B cell (primary cell): ENCODE measurements at regions of chr7 and their contacts with region 1.

Region 1: DNA sequence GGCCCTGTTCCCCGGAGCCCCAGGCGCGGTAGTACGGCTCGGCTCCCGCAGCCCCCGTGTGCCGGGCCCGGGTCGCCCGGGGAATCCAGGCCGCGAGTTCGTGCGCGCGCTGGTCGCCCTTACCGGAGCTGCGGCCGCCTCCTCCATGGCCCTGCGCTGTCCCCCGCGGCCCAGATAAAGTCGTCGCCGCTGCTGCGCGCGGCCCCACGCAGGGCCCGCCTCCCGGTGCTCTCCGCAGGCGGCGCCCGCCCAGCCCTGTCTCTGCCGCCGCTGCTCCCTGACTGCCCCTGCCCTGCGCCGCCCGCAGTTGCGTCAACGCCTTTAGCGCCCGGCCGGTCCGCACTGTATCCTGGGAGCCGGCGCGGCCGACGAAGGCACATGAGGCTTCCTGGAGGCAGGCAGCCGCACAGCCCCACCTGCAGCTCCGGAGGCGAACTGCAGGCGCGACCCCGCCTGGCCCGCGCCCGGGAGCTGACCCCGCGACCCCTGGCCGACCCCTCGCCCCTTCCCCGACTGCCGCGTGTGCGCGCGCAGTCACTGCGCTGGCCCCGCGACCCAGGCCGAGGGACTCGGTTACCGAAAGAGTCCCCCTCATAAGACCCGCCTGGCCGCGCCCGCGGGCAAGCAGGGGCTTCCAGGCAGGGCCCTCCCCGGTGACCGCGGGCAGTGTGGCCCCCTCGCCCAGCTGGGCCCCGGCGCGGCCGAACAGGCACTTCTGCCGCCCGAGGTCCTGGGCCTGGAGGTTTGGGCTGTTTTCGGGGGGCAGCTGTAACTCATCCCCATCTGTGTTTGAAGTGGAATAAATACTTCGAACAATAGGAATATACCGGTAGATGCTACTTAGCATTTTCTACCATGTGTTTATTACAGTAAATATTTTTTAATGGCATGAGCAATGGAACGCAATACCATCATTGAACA is 127.1 kb upstream of the ZNF746 start:
- DNase-seq: peak; percentile 94
- ATAC-seq: peak; percentile 90
- H3K4me3 ChIP-seq: peak overlapping the region; percentile 38 to 81 (median 76)
- H3K4me3 Mint-ChIP-seq: peak overlapping the region; percentile 95
- H3K27ac ChIP-seq: peak overlapping the region; percentile 48 to 78
- H3K27ac Mint-ChIP-seq: peak overlapping the region; percentile 93
- H3K4me1 ChIP-seq: peaks cover 25 to 33% of the 10 kb centered on the region in 2 donors
- H3K4me1 Mint-ChIP-seq: peaks cover 39% of the 10 kb centered on the region
- H3K27me3 ChIP-seq: peaks cover 0 to 3% (median 0%) of the 10 kb centered on the region in 4 experiments
- H3K27me3 Mint-ChIP-seq: peaks cover 9% of the 10 kb centered on the region
- CTCF ChIP-seq: peak; percentile 93

Region 2: DNA sequence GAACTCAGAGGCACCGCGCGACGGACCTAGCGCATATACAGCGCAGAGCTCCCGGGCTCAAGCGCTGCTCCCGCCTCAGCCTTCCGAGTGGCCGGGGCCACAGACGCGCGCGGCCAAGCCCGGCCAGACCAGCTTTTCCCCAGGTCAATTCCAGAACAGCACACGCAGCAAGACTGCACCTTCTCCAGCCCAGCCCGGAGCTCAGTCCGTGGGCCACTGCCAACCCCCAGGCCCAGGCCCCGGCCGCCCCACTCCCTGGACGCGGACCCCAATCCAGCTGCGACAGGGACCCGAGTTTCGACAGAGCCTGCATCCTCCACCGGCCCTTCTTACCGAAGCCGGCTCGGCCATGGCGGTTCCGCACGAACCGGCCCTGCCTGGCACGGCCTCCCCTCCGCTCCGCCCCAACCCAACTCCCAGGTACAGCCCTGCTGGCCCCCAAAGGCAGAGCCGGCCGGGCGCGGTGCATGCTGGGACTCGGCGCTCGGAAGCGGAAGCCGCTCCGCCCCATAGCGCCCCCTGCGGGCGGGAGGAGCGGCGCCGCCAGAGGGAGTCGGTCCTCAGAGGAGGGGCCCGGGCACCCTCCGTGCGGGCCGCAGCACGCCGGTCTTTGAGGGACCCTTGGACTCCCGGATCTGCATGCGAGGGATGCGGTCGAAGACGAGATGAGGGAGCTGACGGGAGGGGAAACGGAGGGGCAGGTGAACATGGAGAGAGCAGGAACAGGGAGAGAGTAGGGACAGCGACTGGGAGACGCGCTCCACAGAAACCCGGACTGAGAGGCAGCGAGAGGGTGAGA is 498.6 kb before region 1 on chr7 and contains the start of gene ZNF425:
- CTCF ChIA-PET with region 1: no interaction called
- POLR2A ChIA-PET with region 1: no interaction called
- intact Hi-C with region 1: loop called (anchors 2 kb)
- DNase-seq: peak; percentile 95
- ATAC-seq: peak; percentile 84
- H3K4me3 ChIP-seq: peak within 1 kb of the TSS; percentile 64 to 98 (median 88)
- H3K4me3 Mint-ChIP-seq: peak within 1 kb of the TSS; percentile 97
- H3K27ac ChIP-seq: peak within 1 kb of the TSS; percentile 85 to 89
- H3K27ac Mint-ChIP-seq: peak within 1 kb of the TSS; percentile 99
- H3K4me1 ChIP-seq: peaks cover 12 to 14% of the 10 kb centered on the region in 2 donors
- H3K4me1 Mint-ChIP-seq: peaks cover 22% of the 10 kb centered on the region
- H3K27me3 ChIP-seq: no peaks in the 10 kb centered on the region
- H3K27me3 Mint-ChIP-seq: no peaks in the 10 kb centered on the region
- CTCF ChIP-seq: peak; percentile 89
- total RNA-seq, gene ZNF425: 2.8 and 3.3 TPM in 2 replicates

Region 3: DNA sequence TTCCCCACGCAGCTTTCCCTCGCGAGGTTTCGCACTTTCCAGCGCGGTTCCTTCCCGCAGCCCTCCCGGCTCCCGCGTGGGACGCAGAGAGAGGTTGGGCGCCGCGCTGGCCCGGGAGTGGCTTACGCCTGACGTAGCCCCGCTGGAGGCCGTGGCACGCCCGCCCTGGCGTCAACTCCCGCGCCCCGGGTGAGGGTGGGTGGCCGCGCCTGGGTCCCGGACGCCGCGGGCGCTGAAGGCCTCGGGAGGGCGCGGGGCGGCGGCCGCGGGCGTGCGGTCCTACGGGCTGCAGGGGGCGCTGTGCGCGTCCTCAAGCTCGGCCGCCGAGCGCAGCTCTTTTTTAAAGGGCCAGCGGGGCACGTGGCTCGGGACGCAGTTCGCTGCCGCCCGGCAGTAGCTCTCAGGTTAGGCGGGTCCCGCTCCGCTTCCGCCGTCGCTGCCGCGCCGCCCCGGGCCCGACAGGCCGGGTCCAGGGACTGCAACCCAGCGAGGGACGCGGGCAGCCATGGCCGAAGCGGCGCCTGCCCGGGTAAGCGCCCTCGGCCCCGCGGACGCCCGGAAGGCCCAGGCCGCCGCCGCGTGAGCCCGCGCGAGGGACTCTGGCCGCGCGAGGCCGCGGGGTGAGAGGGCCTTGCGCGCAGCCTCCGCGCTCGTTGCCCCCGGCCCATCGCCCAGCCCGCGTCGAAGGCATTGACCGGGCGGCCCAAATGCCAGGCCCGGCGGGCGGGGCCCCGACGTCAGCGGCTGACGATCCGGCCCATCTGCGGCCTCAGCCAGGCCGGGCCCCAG is 362.7 kb before region 1 on chr7 and contains the start of gene ZNF783:
- CTCF ChIA-PET with region 1: interaction called, 3 read pairs
- POLR2A ChIA-PET with region 1: interaction called, 3 read pairs
- intact Hi-C with region 1: loop called (anchors 1 kb)
- DNase-seq: peak; percentile 94
- ATAC-seq: peak; percentile 93
- H3K4me3 ChIP-seq: peak within 1 kb of the TSS in 4 of 5 experiments; percentile 64 to 75 (median 68)
- H3K4me3 Mint-ChIP-seq: peak within 1 kb of the TSS; percentile 94
- H3K27ac ChIP-seq: peak within 1 kb of the TSS; percentile 69 to 76
- H3K27ac Mint-ChIP-seq: peak within 1 kb of the TSS; percentile 92
- H3K4me1 ChIP-seq: peaks cover 13 to 17% of the 10 kb centered on the region in 2 donors
- H3K4me1 Mint-ChIP-seq: peaks cover 21% of the 10 kb centered on the region
- H3K27me3 ChIP-seq: no peaks in the 10 kb centered on the region
- H3K27me3 Mint-ChIP-seq: no peaks in the 10 kb centered on the region
- CTCF ChIP-seq: peak; percentile 86
- total RNA-seq, gene ZNF783: 43.8 and 44.8 TPM in 2 replicates

Region 4: GRCh38 chr7:149330914-149331567 is 293.6 kb before region 1 on chr7:
- CTCF ChIA-PET with region 1: no interaction called
- POLR2A ChIA-PET with region 1: no interaction called
- intact Hi-C with region 1: no loop called
- DNase-seq: no peak
- ATAC-seq: no peak
- H3K4me3 ChIP-seq: no peak overlapping the region
- H3K4me3 Mint-ChIP-seq: no peak overlapping the region
- H3K27ac ChIP-seq: no peak overlapping the region
- H3K27ac Mint-ChIP-seq: no peak overlapping the region
- H3K4me1 ChIP-seq: no peaks in the 10 kb centered on the region
- H3K4me1 Mint-ChIP-seq: no peaks in the 10 kb centered on the region
- H3K27me3 ChIP-seq: peaks cover 0 to 10% (median 1%) of the 10 kb centered on the region in 4 experiments
- H3K27me3 Mint-ChIP-seq: peaks cover 26% of the 10 kb centered on the region
- CTCF ChIP-seq: no peak

Region 5: DNA sequence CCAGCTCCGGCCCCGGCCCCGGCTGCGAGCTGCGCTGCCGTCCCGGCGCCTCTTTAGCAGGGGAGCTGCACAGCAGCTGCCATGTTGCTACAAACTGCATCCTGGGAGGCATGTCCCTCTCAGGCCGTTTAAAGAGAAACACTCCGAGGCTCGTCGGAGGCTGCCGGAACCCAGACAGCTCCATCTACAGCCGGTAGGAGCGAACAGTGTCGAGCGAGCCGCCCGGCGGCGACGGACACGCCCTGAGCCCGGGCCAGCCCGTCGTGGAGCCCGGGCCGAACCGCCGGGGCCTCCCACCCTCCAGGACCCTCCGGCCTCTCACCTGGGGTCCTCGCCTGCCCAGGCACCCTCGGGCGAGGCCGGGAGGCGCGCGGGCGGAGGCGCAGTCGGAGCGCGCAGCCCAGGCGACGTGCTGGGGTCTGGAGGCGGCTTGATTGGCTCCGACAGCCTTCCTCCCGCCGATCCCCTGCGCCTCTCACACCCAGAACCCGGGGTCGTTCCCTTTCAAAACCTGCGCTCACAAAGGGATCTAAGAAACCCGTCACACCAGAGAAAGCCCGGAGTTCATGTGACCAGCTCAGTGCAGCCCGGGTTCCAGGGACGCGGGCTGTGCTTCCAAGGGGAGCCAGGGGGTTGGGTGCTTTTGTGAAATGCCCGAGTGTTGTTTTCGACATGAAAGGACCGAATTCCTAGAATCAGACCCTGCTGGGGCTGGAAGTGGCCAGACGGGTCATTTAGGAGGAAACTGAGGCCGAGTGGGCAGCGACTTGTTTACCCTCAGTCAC is 164.0 kb before region 1 on chr7 and contains the start of gene ZNF777:
- CTCF ChIA-PET with region 1: interaction called, 14 read pairs
- POLR2A ChIA-PET with region 1: interaction called, 3 read pairs
- intact Hi-C with region 1: loop called (anchors 1 kb)
- DNase-seq: peak; percentile 87
- ATAC-seq: peak; percentile 97
- H3K4me3 ChIP-seq: peak within 1 kb of the TSS; percentile 25 to 94 (median 70)
- H3K4me3 Mint-ChIP-seq: peak within 1 kb of the TSS; percentile 92
- H3K27ac ChIP-seq: peak within 1 kb of the TSS in 1 of 2 donors; percentile 65
- H3K27ac Mint-ChIP-seq: peak within 1 kb of the TSS; percentile 89
- H3K4me1 ChIP-seq: peaks cover 14% of the 10 kb centered on the region in 2 donors
- H3K4me1 Mint-ChIP-seq: peaks cover 31% of the 10 kb centered on the region
- H3K27me3 ChIP-seq: peaks cover 0 to 11% (median 2%) of the 10 kb centered on the region in 4 experiments
- H3K27me3 Mint-ChIP-seq: peaks cover 14% of the 10 kb centered on the region
- CTCF ChIP-seq: peak; percentile 43
- total RNA-seq, gene ZNF777: 14.9 and 16.0 TPM in 2 replicates

Region 6: GRCh38 chr7:149598721-149599306 is 25.9 kb before region 1 on chr7:
- CTCF ChIA-PET with region 1: interaction called, 27 read pairs
- POLR2A ChIA-PET with region 1: interaction called, 3 read pairs
- intact Hi-C with region 1: loop called (anchors 1 kb)
- DNase-seq: no peak
- ATAC-seq: no peak
- H3K4me3 ChIP-seq: peak overlapping the region in 1 of 5 experiments; percentile 45
- H3K4me3 Mint-ChIP-seq: no peak overlapping the region
- H3K27ac ChIP-seq: peak overlapping the region; percentile 56 to 86
- H3K27ac Mint-ChIP-seq: peak overlapping the region; percentile 91
- H3K4me1 ChIP-seq: peaks cover 25 to 28% of the 10 kb centered on the region in 2 donors
- H3K4me1 Mint-ChIP-seq: peaks cover 30% of the 10 kb centered on the region
- H3K27me3 ChIP-seq: no peaks in the 10 kb centered on the region
- H3K27me3 Mint-ChIP-seq: no peaks in the 10 kb centered on the region
- CTCF ChIP-seq: peak; percentile 19

Region 7: GRCh38 chr7:149838224-149838947 is 213.7 kb after region 1 on chr7 and contains the start of gene ZNF862:
- CTCF ChIA-PET with region 1: interaction called, 4 read pairs
- POLR2A ChIA-PET with region 1: no interaction called
- intact Hi-C with region 1: loop called (anchors 1 kb)
- DNase-seq: peak; percentile 97
- ATAC-seq: peak; percentile 95
- H3K4me3 ChIP-seq: peak within 1 kb of the TSS; percentile 60 to 88 (median 73)
- H3K4me3 Mint-ChIP-seq: peak within 1 kb of the TSS; percentile 96
- H3K27ac ChIP-seq: peak within 1 kb of the TSS; percentile 51 to 77
- H3K27ac Mint-ChIP-seq: peak within 1 kb of the TSS; percentile 93
- H3K4me1 ChIP-seq: peaks cover 13 to 15% of the 10 kb centered on the region in 2 donors
- H3K4me1 Mint-ChIP-seq: peaks cover 19% of the 10 kb centered on the region
- H3K27me3 ChIP-seq: no peaks in the 10 kb centered on the region
- H3K27me3 Mint-ChIP-seq: peaks cover 22% of the 10 kb centered on the region
- CTCF ChIP-seq: no peak
- total RNA-seq, gene ZNF862: 24.3 and 33.0 TPM in 2 replicates